Colonic mucosa (tissue), 4 donors: ENCODE measurements at regions of chr5 and their contacts with region 1.

Region 1: DNA sequence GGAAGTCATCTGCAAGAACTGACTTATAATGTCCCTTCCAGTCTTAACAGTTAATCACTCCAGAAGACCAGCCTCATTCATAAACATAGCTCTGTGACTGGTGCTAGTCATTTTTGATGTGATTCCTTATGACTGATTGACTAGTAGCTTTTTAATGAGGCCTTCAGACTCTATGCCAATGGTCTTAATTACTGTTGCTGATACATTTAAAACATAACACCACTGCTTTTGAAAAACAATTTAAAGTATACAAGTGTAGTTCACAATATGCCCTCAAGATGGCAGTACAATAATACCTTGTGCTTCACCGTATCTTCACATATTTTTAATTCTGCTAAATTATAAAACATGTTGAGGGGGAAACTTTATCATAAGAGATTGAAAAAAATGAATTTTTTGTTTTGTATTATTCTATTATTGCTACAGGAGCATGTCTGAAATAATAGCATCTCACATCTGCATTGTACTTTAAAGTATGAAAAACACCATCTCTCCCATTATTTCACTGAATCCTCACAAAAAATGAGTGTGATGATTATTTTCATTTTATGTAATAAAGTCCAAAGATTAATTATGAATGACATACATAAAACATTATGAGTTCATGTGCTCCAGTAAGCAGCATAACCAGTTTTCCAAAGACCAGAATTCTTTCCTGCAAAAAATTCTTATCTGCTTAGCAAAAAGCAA is 55.2 kb upstream of the SHISAL2B start:
- DNase-seq: no peak
- H3K4me3 ChIP-seq: no peak overlapping the region
- H3K27ac ChIP-seq: no peak overlapping the region
- H3K4me1 ChIP-seq: no peaks in the 10 kb centered on the region
- H3K27me3 ChIP-seq: no peaks in the 10 kb centered on the region
- CTCF ChIP-seq: peak; percentile 75

Region 2: DNA sequence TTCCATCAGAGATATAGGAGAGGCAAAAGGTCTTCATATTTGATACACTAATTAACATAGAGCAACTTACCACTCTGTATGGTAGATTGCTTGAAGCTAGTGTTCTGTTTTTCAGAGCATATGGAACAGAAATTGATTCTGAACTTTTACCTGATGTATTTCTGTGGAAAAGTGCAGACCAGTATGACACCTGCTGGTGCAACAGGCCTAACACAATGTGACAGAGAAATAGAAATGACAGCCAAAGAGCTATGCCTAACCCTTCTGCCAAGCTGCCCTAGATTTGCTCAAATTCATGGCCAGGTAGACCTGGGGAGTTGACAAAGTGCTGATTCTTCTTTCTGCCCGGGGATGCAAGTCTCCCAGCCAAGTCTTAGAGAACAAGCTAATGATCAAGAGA is 534.9 kb before region 1 on chr5:
- intact Hi-C with region 1: no loop called
- DNase-seq: no peak
- H3K4me3 ChIP-seq: no peak overlapping the region
- H3K27ac ChIP-seq: no peak overlapping the region
- H3K4me1 ChIP-seq: no peaks in the 10 kb centered on the region
- H3K27me3 ChIP-seq: no peaks in the 10 kb centered on the region
- CTCF ChIP-seq: no peak

Region 3: DNA sequence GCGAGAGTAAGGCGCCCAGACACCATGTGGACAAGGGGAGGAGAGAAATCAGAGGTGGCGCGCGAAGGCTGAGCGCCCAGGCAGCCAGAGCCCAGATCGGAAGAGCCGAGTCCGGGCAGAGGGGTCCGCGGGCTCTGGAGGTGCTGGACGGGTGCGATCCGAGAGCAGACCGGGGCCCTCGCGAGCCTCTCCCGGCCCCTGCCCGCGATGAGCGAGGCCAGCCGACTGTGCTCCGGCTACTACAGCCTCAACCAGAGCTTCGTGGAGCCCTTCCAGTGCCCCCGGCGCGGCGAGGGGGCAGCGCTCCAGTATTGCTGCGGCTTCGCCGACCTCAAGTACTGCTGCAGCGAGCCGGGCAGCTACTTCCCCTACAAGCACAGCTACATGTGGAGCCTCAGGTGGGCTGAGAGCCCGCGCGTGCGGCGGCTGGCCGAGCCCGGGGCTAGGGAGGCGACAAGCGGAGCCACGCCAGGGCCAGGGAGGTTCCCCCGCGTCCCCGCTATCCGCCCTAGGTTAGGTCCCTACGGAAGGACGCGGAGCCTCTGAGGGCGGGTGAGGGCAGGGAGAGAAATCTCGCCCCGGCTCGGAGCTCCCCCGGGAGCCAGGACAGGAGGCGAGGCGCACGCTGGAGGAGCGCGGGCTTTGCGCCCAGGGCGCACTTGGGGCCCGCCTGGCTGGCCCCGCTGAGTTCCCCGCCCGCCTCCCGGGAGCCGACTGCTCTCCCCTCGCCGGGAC is 55.4 kb after region 1 on chr5 and contains the start of gene SHISAL2B:
- intact Hi-C with region 1: no loop called
- DNase-seq: no peak
- H3K4me3 ChIP-seq: no peak within 1 kb of the TSS
- H3K27ac ChIP-seq: no peak within 1 kb of the TSS
- H3K4me1 ChIP-seq: no peaks in the 10 kb centered on the region
- H3K27me3 ChIP-seq: peaks cover 21% of the 10 kb centered on the region
- CTCF ChIP-seq: no peak
- total RNA-seq, gene SHISAL2B: not detected

Region 4: GRCh38 chr5:64784451-64785025 is 149.4 kb after region 1 on chr5:
- intact Hi-C with region 1: loop called (anchors 2 kb)
- DNase-seq: peak; percentile 77
- H3K4me3 ChIP-seq: no peak overlapping the region
- H3K27ac ChIP-seq: no peak overlapping the region
- H3K4me1 ChIP-seq: no peaks in the 10 kb centered on the region
- H3K27me3 ChIP-seq: no peaks in the 10 kb centered on the region
- CTCF ChIP-seq: peak; percentile 83